ENCODE measurements at regions of chr14 and their contacts with region 1.

Region 1: GRCh38 chr14:22513066-22513812 is 75.8 kb downstream of the DAD1 start:
- DNase-seq: no peak
- ATAC-seq: no peak
- H3K4me3 ChIP-seq: peak overlapping the region; percentile 61
- H3K4me3 Mint-ChIP-seq: peak overlapping the region; percentile 78
- H3K27ac ChIP-seq: peak overlapping the region; percentile 77 to 99
- H3K27ac Mint-ChIP-seq: peak overlapping the region; percentile 93
- H3K4me1 ChIP-seq: peaks cover 93% of the 10 kb centered on the region
- H3K4me1 Mint-ChIP-seq: peaks cover 95% of the 10 kb centered on the region
- H3K27me3 ChIP-seq: no peaks in the 10 kb centered on the region
- H3K27me3 Mint-ChIP-seq: no peaks in the 10 kb centered on the region
- CTCF ChIP-seq: no peak

Region 2: DNA sequence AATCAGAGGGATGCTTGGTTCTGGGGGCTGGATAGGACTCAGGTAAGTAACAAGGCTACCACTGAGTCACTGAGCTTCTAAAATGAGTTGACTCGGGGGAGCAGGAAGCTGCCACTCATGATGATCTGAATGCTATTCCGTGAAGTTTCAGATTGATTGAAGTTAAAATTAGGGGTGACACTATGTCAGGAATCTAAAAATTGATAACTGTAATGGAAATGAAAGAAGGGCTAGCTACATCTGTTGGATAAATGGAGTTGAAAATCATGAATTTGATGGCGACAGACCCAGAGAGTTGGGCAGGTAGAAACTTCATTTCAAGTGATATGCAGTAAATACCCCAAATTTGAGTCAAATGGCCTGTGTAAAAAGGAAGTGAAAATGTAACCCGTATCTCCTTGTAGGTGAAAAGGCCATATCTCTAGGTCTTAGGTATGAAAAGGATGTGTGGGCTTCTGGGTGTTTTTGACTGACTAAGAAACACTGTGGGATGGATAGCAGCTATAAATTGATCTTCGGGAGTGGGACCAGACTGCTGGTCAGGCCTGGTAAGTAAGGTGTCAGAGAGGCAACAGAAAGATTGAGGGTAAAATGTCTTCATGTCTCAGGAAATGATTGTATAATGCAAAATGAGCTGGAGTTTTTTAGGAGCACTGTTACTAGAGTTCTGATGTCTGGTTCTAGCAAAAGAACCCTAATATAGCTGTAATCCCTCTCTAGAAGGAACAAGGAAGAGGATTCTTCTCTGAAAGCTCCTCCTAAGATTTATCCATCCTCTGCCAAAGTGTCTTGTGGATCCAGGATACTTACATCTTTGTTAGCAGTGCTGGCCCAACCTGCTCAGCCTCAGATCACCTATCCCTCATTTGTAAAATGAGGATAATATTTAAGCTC is 18.5 kb after region 1 on chr14:
- CTCF ChIA-PET with region 1: interaction called, 9 read pairs
- POLR2A ChIA-PET with region 1: interaction called, 256 read pairs
- intact Hi-C with region 1: loop called (anchors 2 kb)
- DNase-seq: peak in 3 of 14 experiments; percentile 45 to 73 (median 48)
- ATAC-seq: peak; percentile 51
- H3K4me3 ChIP-seq: peak overlapping the region; percentile 61
- H3K4me3 Mint-ChIP-seq: peak overlapping the region; percentile 86
- H3K27ac ChIP-seq: peak overlapping the region; percentile 52 to 99
- H3K27ac Mint-ChIP-seq: peak overlapping the region; percentile 93
- H3K4me1 ChIP-seq: peaks cover 79% of the 10 kb centered on the region
- H3K4me1 Mint-ChIP-seq: peaks cover 95% of the 10 kb centered on the region
- H3K27me3 ChIP-seq: no peaks in the 10 kb centered on the region
- H3K27me3 Mint-ChIP-seq: no peaks in the 10 kb centered on the region
- CTCF ChIP-seq: no peak

Region 3: GRCh38 chr14:22536853-22537338 is 23.7 kb after region 1 on chr14:
- CTCF ChIA-PET with region 1: no interaction called
- POLR2A ChIA-PET with region 1: interaction called, 256 read pairs
- intact Hi-C with region 1: loop called (anchors 2 kb)
- DNase-seq: peak in 13 of 14 experiments; percentile 66 to 92 (median 74)
- ATAC-seq: peak; percentile 85
- H3K4me3 ChIP-seq: peak overlapping the region; percentile 61
- H3K4me3 Mint-ChIP-seq: peak overlapping the region; percentile 81
- H3K27ac ChIP-seq: peak overlapping the region; percentile 61 to 99
- H3K27ac Mint-ChIP-seq: peak overlapping the region; percentile 93
- H3K4me1 ChIP-seq: peaks cover 86% of the 10 kb centered on the region
- H3K4me1 Mint-ChIP-seq: peaks cover 99% of the 10 kb centered on the region
- H3K27me3 ChIP-seq: no peaks in the 10 kb centered on the region
- H3K27me3 Mint-ChIP-seq: no peaks in the 10 kb centered on the region
- CTCF ChIP-seq: no peak